Lower leg skin (tissue), 4 donors: ENCODE measurements at regions of chr10 and their contacts with region 1.

Region 1: GRCh38 chr10:80699602-80700039 is 161.9 kb downstream of the SH2D4B start:
- DNase-seq: peak; percentile 69 to 95
- H3K4me3 ChIP-seq: no peak overlapping the region
- CTCF ChIP-seq: peak in 1 of 3 donors; percentile 20
- POLR2A ChIP-seq: no peak

Region 2: GRCh38 chr10:81021428-81022129 is 322.0 kb after region 1 on chr10:
- intact Hi-C with region 1: loop called (anchors 10 kb)
- DNase-seq: no peak
- H3K4me3 ChIP-seq: no peak overlapping the region
- CTCF ChIP-seq: no peak
- POLR2A ChIP-seq: no peak